ENCODE measurements at regions of chr5 and their contacts with region 1.

Region 1: GRCh38 chr5:147188200-147189108 is 46.4 kb upstream of the STK32A start:
- DNase-seq: peak; percentile 44 to 59 (median 59)
- H3K4me3 ChIP-seq: no peak overlapping the region
- H3K4me3 Mint-ChIP-seq: peak overlapping the region in 2 of 8 donors; percentile 43 to 73
- H3K27ac ChIP-seq: no peak overlapping the region
- H3K27ac Mint-ChIP-seq: peak overlapping the region in 1 of 7 donors; percentile 39
- H3K4me1 ChIP-seq: peaks cover 6% of the 10 kb centered on the region
- H3K4me1 Mint-ChIP-seq: peaks cover 4 to 7% (median 5%) of the 10 kb centered on the region in 4 donors
- H3K27me3 ChIP-seq: no peaks in the 10 kb centered on the region
- H3K27me3 Mint-ChIP-seq: peaks cover 3 to 8% of the 10 kb centered on the region in 2 donors

Region 2: DNA sequence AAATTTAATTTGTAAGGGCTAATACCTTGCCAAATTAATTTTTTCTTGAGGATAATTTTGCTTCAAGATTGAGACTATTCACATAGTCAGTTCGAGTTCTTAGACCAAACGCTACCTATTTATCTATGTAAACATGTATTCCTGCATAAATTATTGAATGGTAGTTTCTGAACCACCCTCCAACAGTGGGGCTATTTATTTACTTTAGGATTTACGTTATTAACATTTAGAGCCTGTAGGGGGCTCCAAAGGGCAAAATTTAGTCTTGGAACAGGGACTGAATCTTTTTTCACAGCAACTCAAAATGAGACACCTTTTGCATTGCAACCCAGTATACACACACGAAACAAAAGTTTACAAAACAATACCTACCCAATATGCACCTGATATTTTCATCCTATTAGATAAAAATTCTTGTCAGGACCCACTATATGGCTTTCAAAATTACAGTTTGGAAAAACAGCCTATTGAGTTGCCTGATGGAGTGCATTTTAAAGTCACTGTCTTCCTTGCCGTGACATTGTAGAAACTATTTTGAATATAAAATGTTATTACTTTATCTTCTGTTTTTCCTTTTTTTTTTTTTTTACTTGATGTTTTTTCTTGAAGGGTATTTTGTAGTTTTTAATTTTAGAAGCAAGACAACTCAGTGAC is 896.9 kb before region 1 on chr5:
- CTCF ChIA-PET with region 1: no interaction called
- POLR2A ChIA-PET with region 1: no interaction called
- intact Hi-C with region 1: no loop called
- DNase-seq: peak in 4 of 5 donors; percentile 12 to 36 (median 30)
- H3K4me3 ChIP-seq: no peak overlapping the region
- H3K4me3 Mint-ChIP-seq: no peak overlapping the region
- H3K27ac ChIP-seq: no peak overlapping the region
- H3K27ac Mint-ChIP-seq: no peak overlapping the region
- H3K4me1 ChIP-seq: no peaks in the 10 kb centered on the region
- H3K4me1 Mint-ChIP-seq: no peaks in the 10 kb centered on the region
- H3K27me3 ChIP-seq: no peaks in the 10 kb centered on the region
- H3K27me3 Mint-ChIP-seq: no peaks in the 10 kb centered on the region

Region 3: DNA sequence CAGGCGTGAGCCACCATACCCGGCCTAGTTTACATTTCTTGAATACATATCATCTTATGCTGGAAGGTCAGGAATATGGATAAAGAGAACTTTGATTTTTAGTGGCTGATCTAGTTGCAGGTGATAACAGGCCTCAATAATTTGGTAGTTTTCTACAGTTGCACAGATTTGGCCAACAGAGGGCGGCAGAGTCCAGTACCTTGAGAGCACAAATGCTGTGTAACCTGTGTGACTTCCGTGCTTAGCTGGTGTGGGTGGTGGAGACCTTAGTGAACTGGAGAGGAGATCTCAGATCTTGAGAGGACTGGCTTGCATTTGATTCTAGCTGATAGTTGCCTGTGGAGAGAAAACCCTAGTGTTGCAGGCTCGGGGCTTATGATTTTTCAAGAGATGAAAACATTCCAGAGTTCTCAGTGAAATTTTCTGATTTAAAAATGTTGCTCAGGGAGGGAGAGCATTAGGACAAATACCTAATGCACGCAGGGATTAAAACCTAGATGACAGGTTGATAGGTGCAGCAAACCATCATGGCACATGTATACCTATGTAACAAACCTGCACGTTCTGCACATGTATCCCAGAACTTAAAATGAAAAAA is 655.1 kb before region 1 on chr5:
- CTCF ChIA-PET with region 1: interaction called, 56 read pairs
- POLR2A ChIA-PET with region 1: no interaction called
- intact Hi-C with region 1: no loop called
- DNase-seq: peak; percentile 59 to 66 (median 63)
- H3K4me3 ChIP-seq: no peak overlapping the region
- H3K4me3 Mint-ChIP-seq: no peak overlapping the region
- H3K27ac ChIP-seq: no peak overlapping the region
- H3K27ac Mint-ChIP-seq: peak overlapping the region in 2 of 7 donors; percentile 0 to 30
- H3K4me1 ChIP-seq: no peaks in the 10 kb centered on the region
- H3K4me1 Mint-ChIP-seq: peaks cover 2 to 5% (median 4%) of the 10 kb centered on the region in 4 donors
- H3K27me3 ChIP-seq: no peaks in the 10 kb centered on the region
- H3K27me3 Mint-ChIP-seq: peaks cover 0 to 3% of the 10 kb centered on the region in 2 donors

Region 4: GRCh38 chr5:146662229-146662628 is 526.2 kb before region 1 on chr5:
- CTCF ChIA-PET with region 1: interaction called, 3 read pairs
- POLR2A ChIA-PET with region 1: no interaction called
- intact Hi-C with region 1: loop called (anchors 2 kb)
- DNase-seq: peak in 4 of 5 donors; percentile 28 to 42 (median 40)
- H3K4me3 ChIP-seq: no peak overlapping the region
- H3K4me3 Mint-ChIP-seq: no peak overlapping the region
- H3K27ac ChIP-seq: no peak overlapping the region
- H3K27ac Mint-ChIP-seq: no peak overlapping the region
- H3K4me1 ChIP-seq: no peaks in the 10 kb centered on the region
- H3K4me1 Mint-ChIP-seq: peaks cover 0 to 5% (median 2%) of the 10 kb centered on the region in 4 donors
- H3K27me3 ChIP-seq: no peaks in the 10 kb centered on the region
- H3K27me3 Mint-ChIP-seq: no peaks in the 10 kb centered on the region

Region 5: DNA sequence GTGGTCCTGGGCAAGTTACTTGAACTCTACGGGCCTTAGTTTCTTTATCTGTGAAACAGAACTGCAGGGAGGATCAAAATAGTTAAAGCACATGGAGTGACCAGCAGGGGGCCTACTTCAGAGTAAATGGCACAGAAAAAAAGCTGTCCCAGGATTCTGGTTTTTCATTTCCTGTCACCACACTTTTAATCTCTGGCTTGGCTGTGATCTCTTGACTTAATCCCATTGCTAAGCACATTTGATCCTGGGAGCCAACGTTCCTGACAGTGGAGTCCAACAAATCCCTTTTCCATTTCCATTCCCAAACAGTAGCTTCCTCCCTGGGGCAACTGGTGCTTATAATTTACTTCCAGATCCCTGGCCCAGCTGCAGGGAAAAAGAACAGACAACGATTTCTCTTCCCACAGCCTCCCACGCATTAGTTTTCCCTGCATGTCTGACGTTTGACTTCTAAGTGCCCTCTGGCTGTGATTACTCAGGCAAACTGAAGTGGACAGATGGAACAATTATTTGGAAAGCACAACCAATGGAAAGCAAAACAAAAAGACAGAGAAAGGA is 90.1 kb before region 1 on chr5:
- CTCF ChIA-PET with region 1: interaction called, 18 read pairs
- POLR2A ChIA-PET with region 1: interaction called, 3 read pairs
- intact Hi-C with region 1: loop called (anchors 5 kb)
- DNase-seq: peak in 2 of 5 donors; percentile 4 to 6
- H3K4me3 ChIP-seq: no peak overlapping the region
- H3K4me3 Mint-ChIP-seq: no peak overlapping the region
- H3K27ac ChIP-seq: no peak overlapping the region
- H3K27ac Mint-ChIP-seq: no peak overlapping the region
- H3K4me1 ChIP-seq: no peaks in the 10 kb centered on the region
- H3K4me1 Mint-ChIP-seq: no peaks in the 10 kb centered on the region
- H3K27me3 ChIP-seq: no peaks in the 10 kb centered on the region
- H3K27me3 Mint-ChIP-seq: no peaks in the 10 kb centered on the region

Region 6: GRCh38 chr5:147200001-147200400 is 11.5 kb after region 1 on chr5:
- CTCF ChIA-PET with region 1: interaction called, 27 read pairs
- POLR2A ChIA-PET with region 1: no interaction called
- intact Hi-C with region 1: no loop called
- DNase-seq: no peak
- H3K4me3 ChIP-seq: no peak overlapping the region
- H3K4me3 Mint-ChIP-seq: no peak overlapping the region
- H3K27ac ChIP-seq: no peak overlapping the region
- H3K27ac Mint-ChIP-seq: no peak overlapping the region
- H3K4me1 ChIP-seq: no peaks in the 10 kb centered on the region
- H3K4me1 Mint-ChIP-seq: no peaks in the 10 kb centered on the region
- H3K27me3 ChIP-seq: no peaks in the 10 kb centered on the region
- H3K27me3 Mint-ChIP-seq: peaks cover 2 to 5% of the 10 kb centered on the region in 2 donors

Region 7: DNA sequence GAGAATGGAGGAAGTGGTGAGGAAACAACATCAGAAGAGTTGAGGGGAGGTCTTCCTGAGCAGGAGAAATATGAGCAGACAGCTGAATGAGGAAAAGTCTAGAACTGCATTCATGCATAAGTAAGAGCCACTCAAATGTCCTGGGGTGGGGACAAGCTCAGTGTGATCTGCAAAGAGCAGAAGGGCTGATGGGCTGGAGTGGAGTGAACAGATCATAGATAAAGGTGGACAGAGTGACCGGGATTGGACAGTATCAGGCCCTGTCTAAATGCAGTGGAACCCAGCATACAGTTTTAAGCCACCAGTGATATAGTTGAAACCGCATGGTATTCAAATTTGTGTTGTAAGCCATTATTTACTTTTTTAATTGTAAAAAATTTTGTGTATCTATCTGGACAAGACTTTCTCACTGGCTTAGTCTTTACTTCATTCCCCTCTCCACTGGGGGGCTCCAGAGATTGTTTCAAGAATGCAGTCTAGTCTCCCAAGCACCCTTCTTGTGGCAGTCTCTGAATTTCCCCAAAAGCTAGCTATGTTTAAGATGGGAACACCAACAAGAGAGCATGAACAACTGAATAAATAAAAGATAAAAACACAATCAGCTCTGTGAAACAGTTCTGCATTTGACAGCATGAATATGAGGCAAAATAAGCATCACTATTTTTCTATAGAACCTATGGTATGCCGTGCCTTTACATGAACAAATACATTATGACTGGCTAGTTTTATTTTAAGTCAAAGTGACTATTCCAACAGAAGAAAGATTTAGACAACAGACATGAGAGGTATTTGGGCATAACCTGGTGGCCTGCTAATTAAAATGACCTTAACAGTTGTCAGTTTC is 35.7 kb after region 1 on chr5:
- CTCF ChIA-PET with region 1: interaction called, 14 read pairs
- POLR2A ChIA-PET with region 1: no interaction called
- intact Hi-C with region 1: no loop called
- DNase-seq: no peak
- H3K4me3 ChIP-seq: no peak overlapping the region
- H3K4me3 Mint-ChIP-seq: peak overlapping the region in 2 of 8 donors; percentile 8 to 29
- H3K27ac ChIP-seq: no peak overlapping the region
- H3K27ac Mint-ChIP-seq: peak overlapping the region in 1 of 7 donors; percentile 9
- H3K4me1 ChIP-seq: peaks cover 3% of the 10 kb centered on the region
- H3K4me1 Mint-ChIP-seq: peaks cover 4 to 10% (median 5%) of the 10 kb centered on the region in 4 donors
- H3K27me3 ChIP-seq: no peaks in the 10 kb centered on the region
- H3K27me3 Mint-ChIP-seq: no peaks in the 10 kb centered on the region

Measured in CD4-positive, alpha-beta memory T cell (primary cell).